ENCODE measurements at regions of chrX and their contacts with region 1.

Region 1: DNA sequence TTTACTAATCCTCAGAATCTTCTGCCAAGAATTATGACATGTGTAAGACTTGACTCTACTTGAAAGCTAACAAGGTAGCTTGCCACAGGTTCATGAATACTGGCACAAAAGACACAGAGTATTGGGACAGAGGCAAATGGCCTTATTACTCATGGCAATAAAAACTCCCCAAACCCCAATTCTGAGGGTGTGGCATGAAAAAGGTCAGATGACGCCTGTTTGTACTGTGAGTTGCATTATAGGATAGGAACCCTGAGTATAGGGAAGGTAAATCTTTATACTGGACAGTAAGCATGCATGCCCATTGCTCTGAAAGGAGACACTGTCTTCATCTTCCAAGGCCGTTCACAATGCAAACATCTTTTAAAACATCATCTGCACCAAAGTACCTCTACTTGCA is 600.0 kb downstream of the IL1RAPL1 start:
- DNase-seq: no peak
- ATAC-seq: no peak
- H3K4me3 ChIP-seq: no peak overlapping the region
- H3K27ac ChIP-seq: no peak overlapping the region
- H3K4me1 ChIP-seq: no peaks in the 10 kb centered on the region
- H3K27me3 ChIP-seq: no peaks in the 10 kb centered on the region
- CTCF ChIP-seq: no peak

Region 2: DNA sequence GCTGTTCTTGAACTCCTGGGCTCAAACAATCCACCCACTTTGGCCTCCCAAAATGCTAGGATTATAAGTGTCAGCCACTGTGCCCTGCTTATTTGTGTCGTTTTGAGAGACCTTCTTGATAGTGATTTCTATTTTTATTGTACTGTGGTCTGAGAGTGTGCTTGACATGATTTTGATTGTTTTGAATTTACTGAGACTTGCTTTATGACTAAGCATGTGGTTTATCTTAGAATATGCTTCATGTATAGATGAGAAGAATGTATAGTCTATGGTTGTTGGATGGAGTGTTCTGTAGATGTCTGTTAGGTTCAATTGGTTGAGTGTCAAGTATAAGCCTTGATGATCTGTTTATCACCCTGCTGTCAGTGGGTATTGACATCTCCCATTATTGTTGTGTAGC is 189.3 kb after region 1 on chrX:
- CTCF ChIA-PET with region 1: no interaction called
- POLR2A ChIA-PET with region 1: interaction called, 19 read pairs
- in situ Hi-C with region 1: no loop called
- intact Hi-C with region 1: no loop called
- DNase-seq: no peak
- ATAC-seq: no peak
- H3K4me3 ChIP-seq: no peak overlapping the region
- H3K27ac ChIP-seq: no peak overlapping the region
- H3K4me1 ChIP-seq: no peaks in the 10 kb centered on the region
- H3K27me3 ChIP-seq: no peaks in the 10 kb centered on the region
- CTCF ChIP-seq: no peak

Region 3: DNA sequence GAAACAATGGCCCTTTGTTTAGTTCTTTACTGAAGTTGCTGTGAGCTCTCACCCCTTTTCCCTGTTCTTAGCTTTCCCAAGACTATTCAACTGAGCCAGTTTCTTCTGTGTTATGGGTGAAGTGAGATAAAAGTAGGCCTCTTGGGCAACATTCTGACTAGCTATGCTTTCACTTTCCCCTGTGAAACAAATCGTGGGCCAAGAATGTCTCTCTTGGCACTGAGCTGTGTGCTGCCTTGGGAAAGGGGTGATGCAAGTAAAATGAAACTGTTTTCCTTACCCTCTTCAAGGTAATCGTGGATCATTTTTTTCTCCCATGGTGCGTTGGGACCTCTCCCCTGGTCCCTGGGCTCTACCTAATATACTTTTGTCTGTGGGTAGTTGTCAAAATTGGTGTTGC is 374.2 kb after region 1 on chrX:
- CTCF ChIA-PET with region 1: no interaction called
- POLR2A ChIA-PET with region 1: no interaction called
- in situ Hi-C with region 1: no loop called
- intact Hi-C with region 1: no loop called
- DNase-seq: no peak
- ATAC-seq: no peak
- H3K4me3 ChIP-seq: no peak overlapping the region
- H3K27ac ChIP-seq: no peak overlapping the region
- H3K4me1 ChIP-seq: no peaks in the 10 kb centered on the region
- H3K27me3 ChIP-seq: no peaks in the 10 kb centered on the region
- CTCF ChIP-seq: no peak